ENCODE measurements at regions of chr5 and their contacts with region 1.

Region 1: DNA sequence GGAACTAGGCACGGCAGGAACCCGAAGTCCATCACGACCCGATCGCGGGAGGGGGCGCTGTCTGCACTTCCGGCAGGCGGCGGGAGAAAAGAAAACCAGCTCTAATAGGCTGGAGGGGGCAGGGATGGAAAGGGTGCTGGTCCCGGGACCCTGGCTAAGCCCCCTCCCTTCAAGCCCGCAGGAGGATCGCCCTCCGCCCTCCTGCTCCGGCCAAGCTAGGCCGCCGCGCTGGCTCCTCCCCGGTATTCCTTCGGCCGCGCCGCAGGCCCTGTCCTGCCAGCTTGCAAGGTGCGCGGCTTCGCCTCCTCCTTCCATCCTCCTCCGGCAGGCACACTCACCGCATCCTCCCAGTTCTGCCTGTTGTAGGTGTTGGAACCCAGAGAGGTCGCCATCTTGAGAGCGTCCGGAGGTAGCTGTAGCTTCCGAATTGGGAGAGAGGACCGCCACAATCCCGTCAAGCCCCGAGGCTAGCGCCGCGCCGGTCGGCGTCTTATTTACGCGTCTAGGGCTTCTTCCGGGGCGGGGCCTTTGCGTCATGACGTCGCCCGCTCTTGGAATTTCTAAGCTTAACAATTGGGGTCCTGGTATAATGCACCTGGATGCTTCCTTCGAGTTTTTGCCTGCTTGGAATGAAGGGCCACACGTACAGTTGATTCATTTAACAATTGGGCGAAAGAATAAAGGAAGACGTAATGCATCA is at the start of gene RBM22:
- DNase-seq: peak; percentile 84 to 96 (median 90)
- ATAC-seq: peak; percentile 89
- H3K4me3 ChIP-seq: peak within 1 kb of the TSS; percentile 83
- H3K4me3 Mint-ChIP-seq: no peak within 1 kb of the TSS
- H3K27ac ChIP-seq: peak within 1 kb of the TSS; percentile 95 to 98
- H3K27ac Mint-ChIP-seq: no peak within 1 kb of the TSS
- H3K4me1 ChIP-seq: peaks cover 6% of the 10 kb centered on the region
- H3K4me1 Mint-ChIP-seq: no peaks in the 10 kb centered on the region
- H3K27me3 ChIP-seq: no peaks in the 10 kb centered on the region
- H3K27me3 Mint-ChIP-seq: no peaks in the 10 kb centered on the region
- CTCF ChIP-seq: peak; percentile 75
- total RNA-seq, gene RBM22: 98.2 to 101 TPM

Region 2: DNA sequence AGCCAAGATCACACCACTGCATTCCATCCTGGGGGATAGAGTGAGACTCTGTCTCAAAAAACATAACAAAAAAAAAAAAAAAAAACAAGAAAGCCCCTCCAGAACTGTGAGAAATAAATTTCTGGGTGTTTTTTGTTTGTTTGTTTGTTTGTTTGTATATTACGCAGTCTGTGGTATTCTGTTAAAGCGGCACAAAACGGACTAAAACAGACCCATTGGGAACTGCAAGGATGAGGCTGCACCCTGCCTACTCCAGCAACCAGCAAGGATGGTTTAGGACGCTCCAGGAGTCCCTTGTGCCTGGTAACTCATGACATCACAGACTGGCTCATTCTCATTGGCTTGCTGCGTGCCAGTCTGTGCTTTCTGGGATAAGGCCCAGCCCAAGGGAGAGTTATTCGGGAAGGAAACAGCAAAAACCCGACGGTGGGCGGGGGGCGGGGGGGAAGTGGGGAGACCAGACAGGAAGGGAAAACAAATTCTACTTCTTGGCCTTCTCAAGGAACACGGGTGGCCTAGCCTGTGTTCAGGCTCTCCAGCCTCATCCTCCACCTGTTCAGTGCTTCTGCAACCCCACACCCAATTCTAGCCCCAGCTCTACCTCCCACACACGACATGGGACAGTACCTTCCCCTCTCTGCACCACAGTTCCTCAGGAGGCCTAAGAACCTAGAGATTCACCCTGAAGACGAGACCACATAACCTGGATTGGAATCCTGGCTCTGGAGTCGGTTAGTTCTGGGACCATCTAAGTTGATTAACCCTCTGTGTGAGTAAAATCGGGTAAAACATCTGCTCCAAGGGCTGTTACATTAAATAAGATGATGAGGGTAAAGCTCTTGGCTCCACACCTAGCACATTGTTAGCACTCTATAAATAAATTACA is 290.9 kb before region 1 on chr5:
- CTCF ChIA-PET with region 1: no interaction called
- POLR2A ChIA-PET with region 1: interaction called, 11 read pairs
- intact Hi-C with region 1: no loop called
- DNase-seq: peak in 10 of 14 experiments; percentile 16 to 77 (median 38)
- ATAC-seq: no peak
- H3K4me3 ChIP-seq: peak overlapping the region; percentile 97
- H3K4me3 Mint-ChIP-seq: peak overlapping the region; percentile 99
- H3K27ac ChIP-seq: peak overlapping the region; percentile 94 to 98
- H3K27ac Mint-ChIP-seq: peak overlapping the region; percentile 98
- H3K4me1 ChIP-seq: peaks cover 65% of the 10 kb centered on the region
- H3K4me1 Mint-ChIP-seq: peaks cover 40% of the 10 kb centered on the region
- H3K27me3 ChIP-seq: no peaks in the 10 kb centered on the region
- H3K27me3 Mint-ChIP-seq: no peaks in the 10 kb centered on the region
- CTCF ChIP-seq: no peak

Region 3: GRCh38 chr5:150656191-150657132 is 44.3 kb before region 1 on chr5:
- CTCF ChIA-PET with region 1: interaction called, 8 read pairs
- POLR2A ChIA-PET with region 1: interaction called, 7 read pairs
- intact Hi-C with region 1: loop called in 1 of 2 experiments (anchors 2 kb)
- DNase-seq: peak; percentile 67 to 92 (median 80)
- ATAC-seq: peak; percentile 94
- H3K4me3 ChIP-seq: peak overlapping the region; percentile 68
- H3K4me3 Mint-ChIP-seq: peak overlapping the region; percentile 85
- H3K27ac ChIP-seq: no peak overlapping the region
- H3K27ac Mint-ChIP-seq: no peak overlapping the region
- H3K4me1 ChIP-seq: peaks cover 15% of the 10 kb centered on the region
- H3K4me1 Mint-ChIP-seq: peaks cover 10% of the 10 kb centered on the region
- H3K27me3 ChIP-seq: no peaks in the 10 kb centered on the region
- H3K27me3 Mint-ChIP-seq: no peaks in the 10 kb centered on the region
- CTCF ChIP-seq: peak; percentile 47

Region 4: DNA sequence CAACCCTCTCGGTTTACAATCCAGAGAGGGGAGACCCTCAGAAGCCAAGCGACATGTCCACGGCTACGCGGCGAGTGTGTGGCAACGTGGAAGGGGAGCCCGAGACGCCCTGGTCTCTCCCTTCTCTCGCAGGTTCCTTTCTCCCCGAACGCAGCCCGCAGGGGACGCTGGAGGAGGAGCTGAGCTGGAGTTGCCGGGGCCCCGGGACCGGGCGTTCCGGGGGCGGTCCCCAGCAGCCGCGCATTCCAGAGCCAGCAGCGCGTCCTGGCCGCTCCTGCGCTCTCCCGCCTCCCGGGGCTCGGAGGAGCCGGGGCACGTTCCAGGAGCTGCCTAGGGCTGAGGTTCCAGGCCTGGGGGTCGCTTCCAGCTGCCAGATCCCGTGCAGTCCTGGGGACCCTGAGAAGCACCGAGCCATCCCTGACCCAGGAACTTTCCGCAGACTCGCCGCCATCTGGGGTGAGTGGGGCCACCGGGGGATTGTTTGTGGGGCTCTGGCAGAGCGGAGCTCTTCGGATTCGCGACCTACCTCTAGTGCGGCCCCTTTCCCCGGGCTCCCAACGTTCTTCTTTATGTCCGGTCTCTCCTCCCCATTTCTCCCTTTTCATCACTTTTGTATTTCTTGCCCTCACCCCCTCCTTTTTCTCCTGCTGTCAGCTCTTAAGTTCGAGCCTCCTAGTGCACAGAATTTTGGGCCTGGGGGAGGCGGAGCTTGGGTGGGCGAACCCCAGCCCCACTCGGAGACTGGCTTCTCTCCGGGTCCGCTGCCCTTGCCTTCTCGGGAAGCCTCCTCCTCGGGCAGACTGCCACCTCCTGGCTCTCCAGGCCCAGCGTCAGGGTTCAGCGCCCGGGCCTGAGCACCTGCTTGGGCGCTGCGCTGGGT is 78.0 kb after region 1 on chr5 and contains the start of gene SMIM3:
- CTCF ChIA-PET with region 1: interaction called, 12 read pairs
- POLR2A ChIA-PET with region 1: interaction called, 52 read pairs
- intact Hi-C with region 1: loop called (anchors 2 to 5 kb)
- DNase-seq: peak; percentile 53 to 84 (median 68)
- ATAC-seq: peak; percentile 63
- H3K4me3 ChIP-seq: peak within 1 kb of the TSS; percentile 96
- H3K4me3 Mint-ChIP-seq: peak within 1 kb of the TSS; percentile 99
- H3K27ac ChIP-seq: peak within 1 kb of the TSS; percentile 62 to 70
- H3K27ac Mint-ChIP-seq: peak within 1 kb of the TSS; percentile 90
- H3K4me1 ChIP-seq: peaks cover 56% of the 10 kb centered on the region
- H3K4me1 Mint-ChIP-seq: peaks cover 58% of the 10 kb centered on the region
- H3K27me3 ChIP-seq: no peaks in the 10 kb centered on the region
- H3K27me3 Mint-ChIP-seq: no peaks in the 10 kb centered on the region
- CTCF ChIP-seq: peak; percentile 41
- total RNA-seq, gene SMIM3: 2.9 TPM

Region 5: GRCh38 chr5:150789943-150790611 is 89.3 kb after region 1 on chr5:
- CTCF ChIA-PET with region 1: interaction called, 3 read pairs
- POLR2A ChIA-PET with region 1: interaction called, 14 read pairs
- intact Hi-C with region 1: no loop called
- DNase-seq: peak; percentile 23 to 83 (median 52)
- ATAC-seq: peak; percentile 96
- H3K4me3 ChIP-seq: no peak overlapping the region
- H3K4me3 Mint-ChIP-seq: peak overlapping the region; percentile 59
- H3K27ac ChIP-seq: no peak overlapping the region
- H3K27ac Mint-ChIP-seq: peak overlapping the region; percentile 64
- H3K4me1 ChIP-seq: peaks cover 20% of the 10 kb centered on the region
- H3K4me1 Mint-ChIP-seq: peaks cover 55% of the 10 kb centered on the region
- H3K27me3 ChIP-seq: no peaks in the 10 kb centered on the region
- H3K27me3 Mint-ChIP-seq: no peaks in the 10 kb centered on the region
- CTCF ChIP-seq: no peak

Region 6: DNA sequence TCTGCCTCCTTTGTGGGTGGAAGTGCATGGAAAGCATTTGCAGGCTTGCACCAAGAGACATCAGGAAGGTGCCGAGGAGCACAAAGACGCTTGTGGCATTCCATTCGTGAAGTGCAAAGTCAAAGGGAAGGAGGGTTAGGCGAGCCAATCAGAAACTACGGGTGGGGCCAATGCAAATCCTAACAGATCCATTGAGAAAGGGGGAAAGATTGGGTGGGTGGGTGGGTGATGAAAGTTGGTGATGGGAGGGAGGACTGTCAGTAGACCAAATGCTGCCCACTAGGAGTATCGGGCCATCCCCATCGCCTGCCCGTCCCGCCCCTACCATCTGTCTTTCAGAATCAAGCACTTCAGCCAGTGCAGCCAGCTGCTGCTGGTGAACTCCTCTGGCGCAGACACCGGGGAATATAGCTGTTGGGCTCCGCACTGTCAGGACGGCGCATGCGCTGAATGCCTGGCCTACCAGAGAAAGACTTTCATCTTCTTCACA is 473.9 kb after region 1 on chr5:
- CTCF ChIA-PET with region 1: no interaction called
- POLR2A ChIA-PET with region 1: no interaction called
- intact Hi-C with region 1: no loop called
- DNase-seq: no peak
- ATAC-seq: no peak
- H3K4me3 ChIP-seq: no peak overlapping the region
- H3K4me3 Mint-ChIP-seq: no peak overlapping the region
- H3K27ac ChIP-seq: no peak overlapping the region
- H3K27ac Mint-ChIP-seq: peak overlapping the region; percentile 24
- H3K4me1 ChIP-seq: peaks cover 6% of the 10 kb centered on the region
- H3K4me1 Mint-ChIP-seq: peaks cover 34% of the 10 kb centered on the region
- H3K27me3 ChIP-seq: no peaks in the 10 kb centered on the region
- H3K27me3 Mint-ChIP-seq: no peaks in the 10 kb centered on the region
- CTCF ChIP-seq: no peak

Measured in CD4-positive, alpha-beta T cell (primary cell).